B cell (primary cell): ENCODE measurements at regions of chr2 and their contacts with region 1.

Region 1: DNA sequence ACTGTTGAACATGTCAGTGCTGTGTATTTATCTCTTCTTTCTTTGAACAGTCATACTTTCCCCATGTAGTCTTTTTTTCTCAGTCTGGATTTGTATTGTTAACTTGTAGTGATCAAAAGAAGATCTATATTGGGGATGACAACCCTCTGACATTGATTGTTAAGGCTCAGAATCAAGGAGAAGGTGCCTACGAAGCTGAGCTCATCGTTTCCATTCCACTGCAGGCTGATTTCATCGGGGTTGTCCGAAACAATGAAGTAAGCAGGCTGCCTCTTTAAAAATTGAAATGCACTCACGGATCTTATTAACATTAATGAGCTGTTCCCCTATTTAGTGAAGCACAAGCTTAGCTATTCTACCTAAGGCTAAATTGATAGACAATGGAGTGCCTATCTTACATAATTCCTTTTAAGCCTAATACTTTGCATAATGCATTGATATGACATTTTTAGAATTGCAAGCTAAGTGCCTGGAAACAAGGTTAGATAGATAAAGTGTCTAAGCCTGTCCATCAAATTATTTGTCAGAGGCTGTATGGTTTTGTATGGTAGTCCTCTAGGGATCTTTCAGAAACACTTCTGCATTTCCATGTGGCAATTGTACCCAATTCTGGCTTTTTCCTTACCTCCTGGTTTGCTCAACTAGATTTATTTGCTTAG is 29.3 kb upstream of the FAM171B start:
- DNase-seq: no peak
- ATAC-seq: no peak
- H3K4me3 ChIP-seq: no peak overlapping the region
- H3K4me3 Mint-ChIP-seq: no peak overlapping the region
- H3K27ac ChIP-seq: no peak overlapping the region
- H3K27ac Mint-ChIP-seq: no peak overlapping the region
- H3K4me1 ChIP-seq: no peaks in the 10 kb centered on the region
- H3K4me1 Mint-ChIP-seq: no peaks in the 10 kb centered on the region
- H3K27me3 ChIP-seq: no peaks in the 10 kb centered on the region
- H3K27me3 Mint-ChIP-seq: no peaks in the 10 kb centered on the region
- CTCF ChIP-seq: no peak

Region 2: GRCh38 chr2:187124529-187125160 is 460.1 kb after region 1 on chr2:
- CTCF ChIA-PET with region 1: no interaction called
- POLR2A ChIA-PET with region 1: no interaction called
- intact Hi-C with region 1: loop called (anchors 10 kb)
- DNase-seq: no peak
- ATAC-seq: no peak
- H3K4me3 ChIP-seq: no peak overlapping the region
- H3K4me3 Mint-ChIP-seq: no peak overlapping the region
- H3K27ac ChIP-seq: no peak overlapping the region
- H3K27ac Mint-ChIP-seq: no peak overlapping the region
- H3K4me1 ChIP-seq: no peaks in the 10 kb centered on the region
- H3K4me1 Mint-ChIP-seq: no peaks in the 10 kb centered on the region
- H3K27me3 ChIP-seq: no peaks in the 10 kb centered on the region
- H3K27me3 Mint-ChIP-seq: no peaks in the 10 kb centered on the region
- CTCF ChIP-seq: no peak